ENCODE measurements at regions of chr22 and their contacts with region 1.

Region 1: GRCh38 chr22:17773606-17774205 is 563 bp downstream of the BID start:
- DNase-seq: peak; percentile 63
- ATAC-seq: peak; percentile 34
- H3K4me3 Mint-ChIP-seq: peak overlapping the region; percentile 86
- H3K27ac Mint-ChIP-seq: peak overlapping the region; percentile 74
- H3K4me1 Mint-ChIP-seq: peaks cover 79% of the 10 kb centered on the region
- H3K27me3 Mint-ChIP-seq: no peaks in the 10 kb centered on the region
- CTCF ChIP-seq: no peak

Region 2: GRCh38 chr22:17597217-17597616 is 176.5 kb before region 1 on chr22:
- CTCF ChIA-PET with region 1: no interaction called
- POLR2A ChIA-PET with region 1: interaction called, 4 read pairs
- intact Hi-C with region 1: loop called (anchors 2 kb)
- DNase-seq: no peak
- ATAC-seq: no peak
- H3K4me3 Mint-ChIP-seq: no peak overlapping the region
- H3K27ac Mint-ChIP-seq: no peak overlapping the region
- H3K4me1 Mint-ChIP-seq: peaks cover 33% of the 10 kb centered on the region
- H3K27me3 Mint-ChIP-seq: no peaks in the 10 kb centered on the region
- CTCF ChIP-seq: no peak

Region 3: DNA sequence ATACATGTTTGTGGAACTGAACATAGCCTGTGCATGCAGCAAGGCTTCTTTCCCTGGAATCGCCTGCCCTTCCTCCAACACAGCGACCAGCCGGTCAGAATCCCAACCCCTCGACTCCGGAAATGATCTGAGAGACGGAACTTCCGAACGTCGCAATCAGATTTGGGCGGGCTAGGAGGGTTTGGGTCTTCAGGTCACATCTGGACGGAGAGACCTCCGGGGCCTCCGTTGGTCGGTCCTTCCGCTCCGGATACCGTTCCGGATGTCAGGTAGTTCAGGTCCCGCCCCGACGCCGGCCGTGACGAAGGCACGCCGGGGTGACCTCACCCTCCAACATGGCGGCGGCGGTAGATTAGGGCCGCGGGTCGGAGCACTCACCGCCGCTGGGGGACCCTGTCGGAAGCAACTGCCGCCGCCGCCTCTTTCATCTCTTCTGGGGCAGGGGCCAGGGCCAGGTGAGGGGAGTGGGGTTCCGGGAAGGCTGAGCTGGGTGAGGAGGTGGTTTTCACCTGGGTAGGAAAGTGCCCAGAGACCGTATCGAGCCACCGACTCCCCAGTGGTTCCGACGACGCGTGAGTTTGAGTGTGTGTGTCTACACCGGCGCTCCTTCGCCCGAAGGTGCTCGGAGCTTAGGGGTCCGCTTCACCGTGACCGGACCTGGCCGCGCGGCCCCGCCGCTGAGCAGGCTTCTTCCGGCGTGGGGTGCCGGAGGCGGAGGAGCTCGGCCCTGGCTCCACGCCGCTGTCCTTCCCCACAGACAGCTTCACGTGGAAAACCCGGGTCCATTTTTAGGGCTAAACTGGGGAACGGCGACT is 135.1 kb before region 1 on chr22 and contains the start of gene BCL2L13:
- CTCF ChIA-PET with region 1: no interaction called
- POLR2A ChIA-PET with region 1: interaction called, 7 read pairs
- intact Hi-C with region 1: loop called (anchors 1 kb)
- DNase-seq: peak; percentile 87
- ATAC-seq: peak; percentile 93
- H3K4me3 Mint-ChIP-seq: peak within 1 kb of the TSS; percentile 88
- H3K27ac Mint-ChIP-seq: peak within 1 kb of the TSS; percentile 94
- H3K4me1 Mint-ChIP-seq: peaks cover 28% of the 10 kb centered on the region
- H3K27me3 Mint-ChIP-seq: no peaks in the 10 kb centered on the region
- CTCF ChIP-seq: no peak
- total RNA-seq, gene BCL2L13: 30.1 and 38.7 TPM in 2 replicates

Region 4: DNA sequence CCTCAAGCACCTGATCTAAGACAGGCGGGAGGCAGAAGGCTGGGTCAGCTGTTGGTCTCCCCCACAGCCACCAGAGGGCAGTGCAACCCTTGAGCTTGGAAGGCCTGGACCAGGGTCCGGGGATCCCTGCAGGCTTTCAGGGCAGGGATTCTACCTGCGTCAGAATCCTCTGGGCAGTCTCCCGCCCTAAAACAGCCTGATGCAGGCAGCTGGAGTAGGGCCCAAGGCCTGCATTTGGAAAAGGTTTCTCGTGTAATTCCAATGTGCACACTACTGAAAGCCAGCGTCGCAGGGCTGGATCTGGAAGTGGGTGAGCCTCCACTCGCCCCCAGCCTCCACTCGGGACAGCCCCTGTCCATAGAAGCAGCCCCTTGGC is 31.2 kb before region 1 on chr22:
- CTCF ChIA-PET with region 1: interaction called, 23 read pairs
- POLR2A ChIA-PET with region 1: interaction called, 16 read pairs
- intact Hi-C with region 1: loop called (anchors 2 kb)
- DNase-seq: peak; percentile 59
- ATAC-seq: peak; percentile 95
- H3K4me3 Mint-ChIP-seq: no peak overlapping the region
- H3K27ac Mint-ChIP-seq: no peak overlapping the region
- H3K4me1 Mint-ChIP-seq: peaks cover 9% of the 10 kb centered on the region
- H3K27me3 Mint-ChIP-seq: no peaks in the 10 kb centered on the region
- CTCF ChIP-seq: no peak

Region 5: DNA sequence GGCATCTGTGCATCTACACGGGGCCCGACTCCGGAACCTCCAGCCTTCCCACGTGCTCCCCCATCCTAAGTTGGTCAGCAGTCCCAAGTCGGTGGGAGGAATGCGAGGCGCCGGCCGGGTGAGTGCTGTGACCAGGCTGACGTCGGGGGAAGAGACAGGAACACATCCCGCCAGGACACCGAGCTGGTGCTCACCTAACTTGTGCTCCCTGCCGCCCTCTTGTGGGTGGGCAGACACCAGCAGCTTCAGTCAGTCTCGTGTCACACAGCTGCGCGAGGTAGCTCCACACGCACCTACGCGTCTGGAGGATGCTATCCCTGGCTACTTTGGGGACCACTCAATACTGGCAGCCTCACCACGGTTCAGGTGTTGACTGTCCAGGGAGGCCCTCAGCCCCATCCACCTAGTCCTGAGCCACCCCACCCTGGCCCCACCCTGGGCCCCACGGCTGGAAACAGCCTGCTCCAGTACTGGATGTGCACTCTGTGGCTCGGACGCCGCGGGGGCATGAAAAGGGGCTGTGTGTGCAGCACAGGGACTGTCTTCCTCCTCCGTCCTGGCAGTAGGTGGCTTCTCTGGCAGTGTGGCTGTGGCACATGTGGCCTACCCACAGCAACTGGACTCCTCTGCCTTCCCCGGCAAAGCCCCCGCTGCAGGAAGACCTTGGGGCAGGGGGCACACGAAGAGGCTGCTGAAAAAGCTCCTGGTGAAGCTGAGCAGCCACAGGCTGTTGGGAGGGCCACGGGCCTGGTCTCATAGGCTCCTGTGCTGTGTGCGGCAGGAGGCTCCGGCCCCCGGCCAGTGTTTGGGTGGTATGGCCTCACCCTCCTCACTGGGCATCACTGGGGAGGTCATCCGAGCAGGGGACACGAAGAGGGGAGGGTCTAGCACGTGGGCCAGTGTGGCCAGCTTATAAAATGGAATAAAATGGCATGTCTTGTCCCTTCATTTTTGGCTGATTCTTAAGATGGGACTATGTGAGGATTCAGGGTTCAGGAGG is 11.8 kb after region 1 on chr22:
- CTCF ChIA-PET with region 1: interaction called, 23 read pairs
- POLR2A ChIA-PET with region 1: interaction called, 68 read pairs
- intact Hi-C with region 1: loop called (anchors 1 kb)
- DNase-seq: peak; percentile 65
- ATAC-seq: peak; percentile 30
- H3K4me3 Mint-ChIP-seq: no peak overlapping the region
- H3K27ac Mint-ChIP-seq: peak overlapping the region; percentile 59
- H3K4me1 Mint-ChIP-seq: peaks cover 34% of the 10 kb centered on the region
- H3K27me3 Mint-ChIP-seq: no peaks in the 10 kb centered on the region
- CTCF ChIP-seq: no peak

Region 6: DNA sequence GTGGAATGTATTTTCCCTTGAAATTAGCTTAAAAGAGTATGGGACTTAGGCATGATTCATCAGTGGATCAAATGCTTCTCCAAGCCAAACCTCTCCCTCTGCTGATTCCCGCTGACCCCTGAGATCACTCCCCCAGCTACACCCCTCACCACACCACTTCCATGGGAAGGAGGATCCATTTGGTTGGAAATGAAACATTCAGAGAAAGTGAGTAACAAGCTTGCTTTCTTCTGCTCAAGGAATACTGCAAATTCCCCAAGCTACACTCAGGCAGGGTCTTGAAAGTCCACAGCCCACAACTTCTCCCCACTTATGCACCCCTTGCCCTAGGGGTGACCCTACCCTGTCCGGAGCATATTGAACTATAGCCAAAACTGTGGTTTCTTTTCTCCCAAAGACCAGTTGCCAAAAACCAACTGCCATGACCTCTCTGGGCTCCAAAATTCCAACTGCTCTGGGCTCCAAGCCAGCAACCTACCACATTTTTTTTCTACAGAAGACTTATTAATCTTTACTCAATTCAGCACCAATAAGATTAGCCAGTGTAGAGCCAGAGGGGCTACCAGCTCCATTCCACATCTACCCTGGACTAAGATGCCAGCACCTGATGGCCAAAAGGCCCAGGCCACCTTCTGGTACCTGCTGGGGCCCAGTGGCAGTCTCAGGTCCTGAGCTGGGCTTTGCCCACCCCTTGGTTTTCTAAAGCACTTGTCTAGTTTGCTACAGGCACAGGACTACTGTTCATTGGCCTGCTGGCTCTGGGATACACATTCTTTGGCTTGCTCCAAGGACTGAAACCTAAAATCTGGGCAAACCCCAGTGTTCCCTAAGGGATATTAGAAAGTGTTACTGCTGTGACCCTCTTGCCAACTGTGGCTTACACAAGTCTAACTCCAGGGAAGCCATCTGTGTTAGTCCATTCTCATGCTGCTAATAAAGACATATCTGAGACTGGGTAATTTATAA is 149.5 kb after region 1 on chr22:
- CTCF ChIA-PET with region 1: no interaction called
- POLR2A ChIA-PET with region 1: no interaction called
- intact Hi-C with region 1: no loop called
- DNase-seq: no peak
- ATAC-seq: no peak
- H3K4me3 Mint-ChIP-seq: no peak overlapping the region
- H3K27ac Mint-ChIP-seq: peak overlapping the region; percentile 19
- H3K4me1 Mint-ChIP-seq: peaks cover 24% of the 10 kb centered on the region
- H3K27me3 Mint-ChIP-seq: no peaks in the 10 kb centered on the region
- CTCF ChIP-seq: no peak

Measured in activated B cell treated with CpG ODN at 0.5 μM for 24 hours (primary cell).